B cell (primary cell): ENCODE measurements at regions of chr1 and their contacts with region 1.

Region 1: GRCh38 chr1:117758444-117759316 is 152.8 kb downstream of the TENT5C start:
- DNase-seq: peak; percentile 84
- ATAC-seq: peak; percentile 86
- H3K4me3 ChIP-seq: peak overlapping the region in 3 of 5 experiments; percentile 34 to 55 (median 47)
- H3K4me3 Mint-ChIP-seq: peak overlapping the region; percentile 84
- H3K27ac ChIP-seq: no peak overlapping the region
- H3K27ac Mint-ChIP-seq: no peak overlapping the region
- H3K4me1 ChIP-seq: peaks cover 10 to 13% of the 10 kb centered on the region in 2 donors
- H3K4me1 Mint-ChIP-seq: peaks cover 13% of the 10 kb centered on the region
- H3K27me3 ChIP-seq: peaks cover 0 to 14% (median 8%) of the 10 kb centered on the region in 4 experiments
- H3K27me3 Mint-ChIP-seq: peaks cover 29% of the 10 kb centered on the region
- CTCF ChIP-seq: peak; percentile 88

Region 2: DNA sequence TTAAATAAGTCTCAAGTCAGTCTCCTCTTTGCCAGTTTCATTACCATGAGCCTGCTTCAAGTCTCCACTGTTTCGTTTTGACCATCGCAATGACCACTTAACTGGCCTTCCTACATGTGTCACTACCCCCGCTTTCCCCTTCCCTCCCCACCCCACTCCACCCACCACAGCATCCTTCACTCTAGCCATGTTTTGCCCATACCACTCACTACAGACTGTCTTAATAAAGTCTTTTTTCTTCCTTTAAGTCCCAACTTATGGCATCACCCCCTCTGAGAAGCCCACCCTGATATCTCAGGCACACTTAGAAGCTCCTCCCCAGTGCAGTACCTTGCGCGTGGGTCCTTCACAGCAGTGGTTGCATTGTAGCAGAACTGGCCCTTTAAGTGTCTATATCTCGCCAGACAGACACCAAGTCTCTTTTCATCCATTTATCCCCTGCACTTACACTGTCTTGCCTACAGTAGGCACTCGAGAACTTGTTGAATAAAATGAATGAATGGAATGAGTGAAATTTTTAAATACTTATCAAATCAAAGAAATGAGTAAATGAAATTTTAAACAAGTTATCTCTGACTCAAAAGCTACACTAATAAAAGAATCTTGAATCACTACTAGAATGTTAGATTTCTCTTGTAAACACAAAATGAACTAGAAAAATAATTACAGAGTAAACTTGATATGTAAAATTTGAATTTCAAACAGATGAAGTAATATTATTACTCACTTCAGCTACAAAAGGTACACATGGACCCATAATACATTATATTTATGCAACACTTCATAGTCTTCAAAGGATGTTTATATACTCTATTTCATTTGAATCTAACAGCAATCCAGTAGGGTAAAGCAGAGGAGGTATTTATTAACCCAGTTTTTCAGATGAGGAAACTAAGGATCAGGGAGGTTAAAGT is 446.2 kb before region 1 on chr1:
- CTCF ChIA-PET with region 1: interaction called, 4 read pairs
- POLR2A ChIA-PET with region 1: no interaction called
- intact Hi-C with region 1: loop called (anchors 5 kb)
- DNase-seq: peak; percentile 13
- ATAC-seq: peak; percentile 39
- H3K4me3 ChIP-seq: no peak overlapping the region
- H3K4me3 Mint-ChIP-seq: no peak overlapping the region
- H3K27ac ChIP-seq: no peak overlapping the region
- H3K27ac Mint-ChIP-seq: no peak overlapping the region
- H3K4me1 ChIP-seq: no peaks in the 10 kb centered on the region
- H3K4me1 Mint-ChIP-seq: no peaks in the 10 kb centered on the region
- H3K27me3 ChIP-seq: no peaks in the 10 kb centered on the region
- H3K27me3 Mint-ChIP-seq: peaks cover 3% of the 10 kb centered on the region
- CTCF ChIP-seq: peak; percentile 64

Region 3: DNA sequence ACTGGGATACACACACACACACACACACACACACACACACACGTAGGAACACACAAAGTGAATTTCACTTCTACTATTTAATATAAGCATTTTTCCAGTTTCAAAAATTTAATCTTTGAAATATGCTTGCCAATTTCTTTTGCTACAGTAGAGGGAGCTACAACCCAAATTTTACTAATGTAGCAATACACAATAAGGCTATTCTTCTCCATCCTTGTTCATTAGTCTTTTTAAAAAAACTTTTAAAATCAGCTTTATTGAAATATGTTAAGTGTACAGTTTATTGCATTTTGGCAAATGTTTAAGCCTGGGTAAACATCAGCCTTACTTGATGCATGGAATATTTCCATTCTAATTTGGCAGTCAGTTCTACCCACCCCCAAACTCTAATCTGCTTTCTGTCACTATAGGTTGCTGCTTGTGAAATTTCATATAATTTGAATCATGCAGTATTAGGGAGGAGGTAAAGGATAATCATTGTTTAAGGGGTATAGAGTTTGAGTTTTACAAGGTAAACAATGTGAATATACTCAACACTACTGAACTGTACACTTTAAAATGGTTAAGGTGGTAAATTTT is 245.8 kb before region 1 on chr1:
- CTCF ChIA-PET with region 1: interaction called, 427 read pairs
- POLR2A ChIA-PET with region 1: no interaction called
- intact Hi-C with region 1: loop called (anchors 1 kb)
- DNase-seq: peak; percentile 52
- ATAC-seq: peak; percentile 51
- H3K4me3 ChIP-seq: no peak overlapping the region
- H3K4me3 Mint-ChIP-seq: no peak overlapping the region
- H3K27ac ChIP-seq: no peak overlapping the region
- H3K27ac Mint-ChIP-seq: no peak overlapping the region
- H3K4me1 ChIP-seq: no peaks in the 10 kb centered on the region
- H3K4me1 Mint-ChIP-seq: peaks cover 5% of the 10 kb centered on the region
- H3K27me3 ChIP-seq: no peaks in the 10 kb centered on the region
- H3K27me3 Mint-ChIP-seq: no peaks in the 10 kb centered on the region
- CTCF ChIP-seq: peak; percentile 82

Region 4: DNA sequence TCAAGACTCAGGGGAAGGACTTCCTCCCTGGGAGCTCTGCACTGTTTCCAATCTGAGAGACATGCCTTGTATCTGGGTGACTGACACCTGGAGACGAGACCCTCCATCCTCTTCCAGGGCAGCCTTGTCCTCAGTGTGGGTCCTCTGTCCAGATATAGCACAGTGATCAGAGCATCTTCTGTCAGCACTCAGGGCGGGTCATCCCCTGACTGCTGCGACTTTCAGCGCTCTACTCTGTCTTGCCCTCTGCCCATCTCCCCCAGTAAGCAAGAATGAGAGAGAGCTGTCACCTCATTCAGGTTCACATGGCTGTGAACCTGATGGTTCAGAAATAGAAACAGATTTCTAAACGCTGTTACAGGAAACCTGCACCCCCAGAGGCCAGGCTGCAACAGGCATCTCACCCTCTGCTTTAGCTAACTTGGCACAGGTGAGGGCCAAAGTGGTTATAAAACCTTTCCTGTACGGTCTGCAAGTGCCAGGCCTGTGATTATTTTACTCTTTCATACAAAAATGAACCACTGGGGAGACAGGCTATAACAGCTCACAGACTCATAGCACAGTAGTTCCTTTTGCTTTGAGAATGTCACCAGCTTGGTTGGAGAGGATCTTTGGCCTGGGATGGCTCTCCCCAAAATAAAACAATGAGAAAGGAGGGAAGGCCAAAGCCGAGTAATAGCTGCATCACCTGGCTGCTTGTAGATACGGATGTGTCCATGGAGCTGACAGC is 164.3 kb before region 1 on chr1:
- CTCF ChIA-PET with region 1: interaction called, 15 read pairs
- POLR2A ChIA-PET with region 1: no interaction called
- intact Hi-C with region 1: no loop called
- DNase-seq: no peak
- ATAC-seq: no peak
- H3K4me3 ChIP-seq: no peak overlapping the region
- H3K4me3 Mint-ChIP-seq: no peak overlapping the region
- H3K27ac ChIP-seq: no peak overlapping the region
- H3K27ac Mint-ChIP-seq: peak overlapping the region; percentile 46
- H3K4me1 ChIP-seq: peaks cover 16 to 26% of the 10 kb centered on the region in 2 donors
- H3K4me1 Mint-ChIP-seq: peaks cover 22% of the 10 kb centered on the region
- H3K27me3 ChIP-seq: no peaks in the 10 kb centered on the region
- H3K27me3 Mint-ChIP-seq: peaks cover 6% of the 10 kb centered on the region
- CTCF ChIP-seq: no peak

Region 5: GRCh38 chr1:117664314-117664713 is 94.4 kb before region 1 on chr1:
- CTCF ChIA-PET with region 1: interaction called, 10 read pairs
- POLR2A ChIA-PET with region 1: no interaction called
- intact Hi-C with region 1: no loop called
- DNase-seq: peak; percentile 92
- ATAC-seq: peak; percentile 87
- H3K4me3 ChIP-seq: peak overlapping the region in 1 of 5 experiments; percentile 37
- H3K4me3 Mint-ChIP-seq: peak overlapping the region; percentile 74
- H3K27ac ChIP-seq: peak overlapping the region; percentile 97 to 99
- H3K27ac Mint-ChIP-seq: peak overlapping the region; percentile 90
- H3K4me1 ChIP-seq: peaks cover 78 to 86% of the 10 kb centered on the region in 2 donors
- H3K4me1 Mint-ChIP-seq: peaks cover 84% of the 10 kb centered on the region
- H3K27me3 ChIP-seq: no peaks in the 10 kb centered on the region
- H3K27me3 Mint-ChIP-seq: no peaks in the 10 kb centered on the region
- CTCF ChIP-seq: no peak

Region 6: DNA sequence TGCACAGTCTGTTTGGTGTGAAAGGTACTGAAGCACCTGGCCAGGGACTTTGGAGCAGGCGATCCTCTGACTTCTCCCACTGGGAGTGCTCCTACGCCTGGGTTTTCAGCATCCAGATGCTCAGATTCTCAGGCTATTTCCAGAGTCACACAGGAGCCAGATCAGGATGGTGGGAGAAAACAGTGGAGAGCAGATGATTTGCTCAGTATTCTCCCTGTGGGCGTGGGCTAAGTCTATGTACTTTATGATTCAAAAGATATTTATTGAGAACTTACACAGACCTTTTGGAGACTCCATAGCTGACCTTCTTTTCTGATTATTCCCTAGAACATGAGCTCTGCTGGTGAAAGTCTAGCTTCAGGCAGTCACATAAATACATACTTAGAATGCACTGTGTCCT is 18.2 kb before region 1 on chr1:
- CTCF ChIA-PET with region 1: interaction called, 19 read pairs
- POLR2A ChIA-PET with region 1: no interaction called
- intact Hi-C with region 1: no loop called
- DNase-seq: no peak
- ATAC-seq: no peak
- H3K4me3 ChIP-seq: no peak overlapping the region
- H3K4me3 Mint-ChIP-seq: no peak overlapping the region
- H3K27ac ChIP-seq: no peak overlapping the region
- H3K27ac Mint-ChIP-seq: no peak overlapping the region
- H3K4me1 ChIP-seq: peaks cover under 1 to 3% of the 10 kb centered on the region in 2 donors
- H3K4me1 Mint-ChIP-seq: peaks cover 5% of the 10 kb centered on the region
- H3K27me3 ChIP-seq: no peaks in the 10 kb centered on the region
- H3K27me3 Mint-ChIP-seq: peaks cover 21% of the 10 kb centered on the region
- CTCF ChIP-seq: no peak

Region 7: GRCh38 chr1:118077331-118078055 is 318.8 kb after region 1 on chr1:
- CTCF ChIA-PET with region 1: no interaction called
- POLR2A ChIA-PET with region 1: no interaction called
- intact Hi-C with region 1: no loop called
- DNase-seq: no peak
- ATAC-seq: no peak
- H3K4me3 ChIP-seq: no peak overlapping the region
- H3K4me3 Mint-ChIP-seq: no peak overlapping the region
- H3K27ac ChIP-seq: no peak overlapping the region
- H3K27ac Mint-ChIP-seq: no peak overlapping the region
- H3K4me1 ChIP-seq: no peaks in the 10 kb centered on the region
- H3K4me1 Mint-ChIP-seq: no peaks in the 10 kb centered on the region
- H3K27me3 ChIP-seq: no peaks in the 10 kb centered on the region
- H3K27me3 Mint-ChIP-seq: peaks cover 4% of the 10 kb centered on the region
- CTCF ChIP-seq: no peak

Region 8: DNA sequence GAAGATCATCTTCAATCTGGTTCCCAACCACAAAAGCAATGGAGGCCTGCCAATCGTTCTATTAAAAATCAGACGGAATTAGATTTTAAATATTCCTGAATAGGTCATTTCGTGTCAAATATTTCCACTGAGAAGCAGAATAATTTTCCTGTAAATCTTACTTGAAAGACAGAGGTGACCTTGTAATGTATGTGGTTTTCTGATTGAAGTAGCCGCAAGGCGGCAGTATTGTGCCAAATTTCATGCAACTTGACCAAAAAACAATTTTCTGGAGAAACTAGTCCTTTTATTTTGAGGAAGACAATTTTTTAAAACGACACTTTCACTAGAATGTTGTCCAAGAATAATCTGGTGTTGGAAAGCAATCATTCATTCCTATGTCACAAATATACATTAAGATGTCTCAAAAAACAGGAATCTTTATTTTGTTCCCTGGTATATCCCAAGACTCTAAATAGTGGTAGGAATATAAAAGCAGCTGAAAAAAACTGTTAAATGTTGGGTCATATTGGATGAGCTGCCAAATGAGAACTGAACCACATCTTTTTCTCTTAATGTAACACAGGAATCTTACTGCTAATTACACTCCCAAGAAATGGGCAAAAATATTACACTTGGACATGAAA is 392.7 kb after region 1 on chr1:
- CTCF ChIA-PET with region 1: no interaction called
- POLR2A ChIA-PET with region 1: no interaction called
- intact Hi-C with region 1: no loop called
- DNase-seq: peak; percentile 43
- ATAC-seq: no peak
- H3K4me3 ChIP-seq: no peak overlapping the region
- H3K4me3 Mint-ChIP-seq: no peak overlapping the region
- H3K27ac ChIP-seq: no peak overlapping the region
- H3K27ac Mint-ChIP-seq: no peak overlapping the region
- H3K4me1 ChIP-seq: no peaks in the 10 kb centered on the region
- H3K4me1 Mint-ChIP-seq: no peaks in the 10 kb centered on the region
- H3K27me3 ChIP-seq: no peaks in the 10 kb centered on the region
- H3K27me3 Mint-ChIP-seq: no peaks in the 10 kb centered on the region
- CTCF ChIP-seq: peak; percentile 77